HepG2 (cell line): ENCODE measurements at regions of chr12 and their contacts with region 1.

Region 1: DNA sequence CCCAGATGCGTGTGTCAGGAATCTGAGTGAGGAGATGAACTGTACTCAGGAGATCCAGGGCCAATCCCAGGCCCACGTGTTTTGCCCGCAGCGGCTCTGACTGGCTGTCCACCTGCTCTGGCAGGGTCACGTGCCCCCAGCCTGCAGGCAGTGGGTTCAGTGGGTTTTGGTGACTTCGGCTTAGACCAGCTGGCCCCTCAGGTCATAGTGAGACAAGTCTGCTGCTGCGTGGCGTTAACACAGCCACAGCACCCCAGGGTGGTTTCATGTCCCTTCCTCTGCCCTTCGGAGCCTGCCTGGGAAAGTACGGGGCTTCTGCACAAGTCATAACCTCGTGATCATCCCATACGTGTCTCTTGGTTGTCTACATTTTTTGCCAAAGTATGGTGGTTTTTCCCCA is 2.6 kb downstream of the FBRSL1 start:
- DNase-seq: no peak
- ATAC-seq: no peak
- H3K4me3 ChIP-seq: peak overlapping the region; percentile 16 to 88 (median 59); a peak in 3 of 6 replicates
- H3K27ac ChIP-seq: no peak overlapping the region
- H3K4me1 ChIP-seq: peaks cover 62% of the 10 kb centered on the region
- H3K27me3 ChIP-seq: peaks cover 2 to 18% of the 10 kb centered on the region in 2 experiments
- CTCF ChIP-seq: no peak
- EP300 ChIP-seq: no peak
- POLR2A ChIP-seq: no peak
- RAD21 ChIP-seq: no peak

Region 2: DNA sequence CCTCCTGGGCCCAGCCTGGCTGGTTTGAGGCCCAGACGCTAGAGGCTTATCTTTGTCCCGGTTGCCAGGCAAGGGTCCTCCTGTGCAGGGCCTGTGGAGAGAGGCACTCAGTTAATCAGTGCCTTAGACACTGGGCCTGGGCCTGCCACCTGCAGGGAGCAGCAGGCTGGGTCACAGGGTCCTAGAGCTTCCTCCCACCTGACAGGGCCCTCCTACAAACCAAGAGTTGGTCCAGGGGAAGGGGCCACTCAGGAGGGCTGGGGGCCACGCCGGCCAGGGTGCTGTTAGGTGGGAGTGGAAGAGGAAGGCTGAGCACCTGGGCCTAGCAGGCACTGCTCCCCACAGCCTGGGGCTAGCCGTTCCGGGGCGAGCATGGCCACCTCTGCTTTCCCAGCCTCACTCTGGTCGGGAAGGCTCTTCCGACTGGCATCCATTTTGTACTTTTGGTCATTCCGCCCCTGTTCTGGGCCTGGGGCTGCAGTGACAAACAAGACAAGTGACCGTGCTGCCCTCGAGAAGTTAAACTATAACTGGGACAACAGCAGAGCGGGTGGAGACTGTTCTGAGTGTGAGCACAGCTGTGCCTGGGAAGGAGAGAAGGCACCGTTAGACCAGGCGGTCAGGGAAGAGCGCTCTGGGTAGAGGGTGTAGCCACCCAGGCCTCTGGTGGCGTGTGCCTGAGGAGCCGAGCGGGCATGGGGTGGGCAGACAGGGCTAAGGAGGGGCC is 24.7 kb after region 1 on chr12:
- CTCF ChIA-PET with region 1: no interaction called
- POLR2A ChIA-PET with region 1: no interaction called
- in situ Hi-C with region 1: no loop called
- intact Hi-C with region 1: loop called (anchors 2 kb)
- DNase-seq: peak; percentile 87
- ATAC-seq: peak; percentile 91
- H3K4me3 ChIP-seq: peak overlapping the region; percentile 38 to 73 (median 56); a peak in 5 of 6 replicates
- H3K27ac ChIP-seq: peak overlapping the region; percentile 92
- H3K4me1 ChIP-seq: peaks cover 23% of the 10 kb centered on the region
- H3K27me3 ChIP-seq: no peaks in the 10 kb centered on the region
- CTCF ChIP-seq: peak; percentile 56
- EP300 ChIP-seq: no peak
- POLR2A ChIP-seq: peak; percentile 38 to 59; a peak in 2 of 4 replicates
- RAD21 ChIP-seq: no peak